MCF 10A (cell line): ENCODE measurements at regions of chr18 and their contacts with region 1.

Region 1: DNA sequence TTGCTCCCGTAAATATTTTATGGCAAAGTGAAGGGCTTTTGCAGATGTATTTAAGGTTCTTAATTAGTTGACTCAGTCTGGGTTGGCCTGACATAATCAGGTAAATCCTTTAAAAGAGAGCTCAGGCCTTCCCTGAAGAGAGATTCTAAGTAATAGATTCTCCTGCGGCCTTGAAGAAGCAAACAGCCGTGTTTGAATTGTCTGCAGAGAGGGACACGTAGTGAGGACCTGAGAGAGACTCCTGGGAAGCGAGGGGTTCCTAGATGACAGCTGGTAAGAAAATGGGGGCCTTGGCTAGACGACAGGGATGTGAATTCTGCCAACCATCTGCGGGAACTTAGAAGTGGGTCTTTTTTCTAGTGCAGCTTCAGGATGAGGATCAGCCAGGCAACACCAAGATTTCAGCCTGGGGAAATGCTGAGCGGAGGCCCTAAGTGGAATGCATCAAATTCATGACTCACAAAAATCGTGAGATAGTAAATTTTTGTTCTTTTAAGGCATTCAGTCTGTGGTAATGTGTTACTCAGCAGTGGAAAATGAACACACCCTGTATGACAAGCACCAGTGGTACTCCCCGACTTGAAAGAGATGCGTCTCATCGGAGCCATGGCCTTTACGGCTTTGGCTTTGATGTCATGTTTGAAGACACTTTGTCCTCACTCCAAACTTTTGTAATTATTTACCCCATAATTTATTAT is 62.1 kb upstream of the SMIM21 start:
- DNase-seq: peak; percentile 80
- H3K4me3 Mint-ChIP-seq: peak overlapping the region; percentile 15
- H3K27ac Mint-ChIP-seq: peak overlapping the region; percentile 97
- H3K4me1 Mint-ChIP-seq: peaks cover 17% of the 10 kb centered on the region
- H3K27me3 Mint-ChIP-seq: no peaks in the 10 kb centered on the region
- CTCF ChIP-seq: no peak

Region 2: GRCh38 chr18:75408554-75409506 is 80.8 kb before region 1 on chr18:
- CTCF ChIA-PET with region 1: interaction called, 3 read pairs
- POLR2A ChIA-PET with region 1: interaction called, 3 read pairs
- intact Hi-C with region 1: loop called (anchors 1 kb)
- DNase-seq: peak; percentile 98
- H3K4me3 Mint-ChIP-seq: no peak overlapping the region
- H3K27ac Mint-ChIP-seq: peak overlapping the region; percentile 64
- H3K4me1 Mint-ChIP-seq: peaks cover 20% of the 10 kb centered on the region
- H3K27me3 Mint-ChIP-seq: no peaks in the 10 kb centered on the region
- CTCF ChIP-seq: no peak

Region 3: DNA sequence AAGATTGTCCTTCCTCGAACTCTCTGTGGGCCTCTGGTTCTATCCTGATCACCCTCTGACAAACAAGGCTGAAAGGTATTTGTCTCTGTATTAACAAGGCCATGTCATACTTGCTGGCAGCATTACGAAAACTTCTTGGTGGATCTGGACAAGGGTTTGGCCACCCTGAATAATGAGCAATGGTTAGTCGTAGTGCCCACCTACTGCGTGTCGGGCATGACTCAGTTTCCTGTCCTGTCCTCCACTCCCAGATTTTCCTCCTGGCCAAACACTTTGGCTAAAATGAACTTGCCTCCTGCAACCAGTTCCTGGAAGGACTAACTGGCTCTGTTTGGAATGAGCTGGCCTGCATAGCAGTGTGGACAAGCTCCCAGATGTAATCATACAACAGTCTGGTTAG is 136.3 kb after region 1 on chr18:
- CTCF ChIA-PET with region 1: no interaction called
- POLR2A ChIA-PET with region 1: no interaction called
- intact Hi-C with region 1: loop called (anchors 5 kb)
- DNase-seq: peak; percentile 86
- H3K4me3 Mint-ChIP-seq: no peak overlapping the region
- H3K27ac Mint-ChIP-seq: no peak overlapping the region
- H3K4me1 Mint-ChIP-seq: peaks cover 25% of the 10 kb centered on the region
- H3K27me3 Mint-ChIP-seq: no peaks in the 10 kb centered on the region
- CTCF ChIP-seq: no peak